Dendritic cell treated with granulocyte-macrophage colony-stimulating factor and Interleukin-4, amounts not matched to agents 40 ng/mL and 50 ng/mL, for 4 days (primary cell): ENCODE measurements at regions of chr6 and their contacts with region 1.

Region 1: GRCh38 chr6:169723200-169723909 is 945 bp downstream of the PHF10 start:
- H3K4me3 Mint-ChIP-seq: peak overlapping the region; percentile 97
- H3K27ac Mint-ChIP-seq: peak overlapping the region; percentile 94
- H3K4me1 Mint-ChIP-seq: peaks cover 19% of the 10 kb centered on the region
- H3K27me3 Mint-ChIP-seq: peaks cover 4% of the 10 kb centered on the region

Region 2: GRCh38 chr6:168355716-168356449 is 1367.5 kb before region 1 on chr6:
- intact Hi-C with region 1: no loop called
- H3K4me3 Mint-ChIP-seq: no peak overlapping the region
- H3K27ac Mint-ChIP-seq: no peak overlapping the region
- H3K4me1 Mint-ChIP-seq: no peaks in the 10 kb centered on the region
- H3K27me3 Mint-ChIP-seq: no peaks in the 10 kb centered on the region

Region 3: DNA sequence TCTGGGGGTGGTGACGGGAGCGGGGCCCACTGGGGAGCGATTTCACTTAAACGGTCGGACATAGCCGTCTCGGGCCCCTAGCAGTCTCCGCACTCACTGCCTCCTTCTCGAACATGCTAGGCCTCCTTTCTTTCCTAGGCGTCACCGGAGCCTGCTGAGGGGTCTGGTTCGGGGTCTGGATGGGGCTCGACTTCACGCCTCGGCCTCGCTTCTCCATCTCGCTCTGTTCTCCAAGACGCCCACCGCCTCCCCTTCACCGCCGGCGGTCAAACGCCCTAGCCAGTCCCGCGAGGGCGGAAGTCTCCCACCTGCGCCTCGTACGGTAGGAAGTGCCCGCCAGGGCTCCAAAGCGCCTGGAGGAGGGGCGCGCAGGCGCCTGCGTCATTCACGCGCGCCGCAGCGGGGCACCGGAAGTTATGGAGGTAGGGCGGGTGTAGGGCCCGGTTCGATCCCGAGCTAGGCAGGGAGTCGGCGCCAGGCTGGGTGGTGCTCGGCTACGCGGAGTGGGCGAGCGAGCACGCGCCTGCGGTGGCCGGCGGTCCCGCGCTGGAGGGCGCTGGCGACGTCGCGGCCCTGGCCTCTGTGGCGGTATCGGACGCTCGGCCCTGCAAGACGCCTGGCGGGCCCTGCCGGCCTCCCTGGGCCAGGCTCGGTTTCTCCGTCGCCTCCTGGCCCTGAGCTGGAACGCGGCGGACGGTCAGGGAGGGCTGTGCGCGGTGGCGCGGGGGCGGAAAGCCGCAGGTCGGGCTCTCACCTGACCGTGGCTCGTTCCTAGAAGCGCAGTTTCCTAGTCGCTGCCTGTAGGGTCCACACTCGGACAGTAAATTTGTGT is 28.1 kb after region 1 on chr6 and contains the starts of genes DYNLT2 and ERMARD:
- intact Hi-C with region 1: loop called (anchors 1 kb)
- H3K4me3 Mint-ChIP-seq: peak within 1 kb of the TSS; percentile 90
- H3K27ac Mint-ChIP-seq: peak within 1 kb of the TSS; percentile 96
- H3K4me1 Mint-ChIP-seq: peaks cover 20% of the 10 kb centered on the region
- H3K27me3 Mint-ChIP-seq: no peaks in the 10 kb centered on the region